WTC11 (cell line): ENCODE measurements at regions of chr10 and their contacts with region 1.

Region 1: DNA sequence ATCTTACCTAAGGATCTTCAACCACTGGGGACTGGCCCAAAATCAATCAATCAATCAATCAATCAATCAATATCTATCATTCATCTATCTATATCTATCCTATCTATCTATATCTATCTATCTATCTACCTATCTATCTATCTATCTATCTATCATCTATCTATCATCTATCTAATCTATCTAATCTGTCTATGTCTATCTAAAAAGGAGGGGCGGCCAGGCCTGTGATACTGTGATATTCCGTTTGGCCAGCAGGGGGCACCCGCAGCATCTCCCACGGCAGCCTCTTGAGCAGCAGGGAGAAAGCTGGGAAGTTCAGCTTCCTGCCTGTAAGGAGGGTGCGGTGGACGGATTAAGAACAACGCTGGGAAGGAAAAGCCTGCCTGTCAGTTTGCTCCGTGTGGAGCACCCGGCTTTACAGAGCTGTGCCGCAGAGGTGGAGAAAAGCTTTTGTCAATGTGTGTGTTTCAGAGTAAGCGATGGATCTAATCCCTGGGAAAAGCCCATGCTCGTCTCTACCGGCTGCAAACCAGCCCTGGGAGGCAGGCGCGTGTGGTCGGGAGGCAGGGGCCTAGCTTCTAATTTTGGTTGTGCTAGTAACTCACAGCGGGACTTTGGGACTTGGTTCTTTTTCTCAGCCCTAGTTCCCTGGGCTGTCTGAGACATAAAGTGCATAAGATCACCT is 125.0 kb downstream of the SH2D4B start:
- DNase-seq: peak; percentile 89
- ATAC-seq: peak; percentile 83
- H3K4me3 Mint-ChIP-seq: peak overlapping the region; percentile 64
- H3K27ac Mint-ChIP-seq: peak overlapping the region; percentile 55
- H3K4me1 Mint-ChIP-seq: peaks cover 18% of the 10 kb centered on the region
- H3K27me3 Mint-ChIP-seq: no peaks in the 10 kb centered on the region
- CTCF ChIP-seq: peak; percentile 88

Region 2: DNA sequence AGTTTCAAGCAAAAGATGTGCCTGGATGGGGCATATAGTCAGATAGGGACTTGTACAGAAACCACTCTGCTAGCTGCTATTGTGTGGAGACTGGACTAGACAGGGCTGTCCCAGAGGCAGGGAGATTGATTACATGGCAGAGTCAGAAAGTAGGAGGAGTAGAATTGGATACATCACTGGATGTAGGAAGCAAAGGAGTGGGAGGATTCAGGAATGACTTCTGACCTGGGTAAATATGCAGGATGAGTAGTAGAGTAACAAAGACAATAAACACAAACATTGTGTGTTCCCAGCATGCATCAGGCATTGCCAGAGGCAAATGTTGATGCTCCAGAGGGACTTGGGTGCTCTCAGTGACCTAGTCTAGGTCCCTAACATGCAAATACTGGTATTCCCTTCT is 342.3 kb before region 1 on chr10:
- CTCF ChIA-PET with region 1: no interaction called
- POLR2A ChIA-PET with region 1: no interaction called
- DNase-seq: no peak
- ATAC-seq: no peak
- H3K4me3 Mint-ChIP-seq: no peak overlapping the region
- H3K27ac Mint-ChIP-seq: no peak overlapping the region
- H3K4me1 Mint-ChIP-seq: peaks cover 8% of the 10 kb centered on the region
- H3K27me3 Mint-ChIP-seq: peaks cover 4% of the 10 kb centered on the region; the same call in 1 of the 2 replicates
- CTCF ChIP-seq: no peak

Region 3: DNA sequence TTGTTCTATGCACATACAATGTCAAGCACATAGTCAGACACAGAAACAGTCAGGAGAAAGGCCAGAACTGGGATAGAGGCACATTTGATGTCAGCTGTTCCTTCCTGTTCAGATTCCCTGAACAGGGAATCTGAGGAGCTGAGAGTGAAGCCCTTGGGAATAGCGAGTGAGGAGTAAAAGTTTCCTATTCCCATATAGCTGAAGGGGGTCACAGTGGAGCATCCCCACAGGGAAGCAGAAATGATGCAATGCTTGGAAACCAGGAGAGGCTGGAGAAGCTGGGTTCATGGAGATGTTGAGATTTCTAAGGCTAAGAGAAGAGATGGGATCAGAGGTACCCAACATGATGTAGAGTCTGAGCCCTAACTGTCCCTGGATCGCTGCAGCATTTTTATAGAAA is 265.7 kb before region 1 on chr10:
- CTCF ChIA-PET with region 1: no interaction called
- POLR2A ChIA-PET with region 1: no interaction called
- DNase-seq: no peak
- ATAC-seq: no peak
- H3K4me3 Mint-ChIP-seq: no peak overlapping the region
- H3K27ac Mint-ChIP-seq: no peak overlapping the region
- H3K4me1 Mint-ChIP-seq: no peaks in the 10 kb centered on the region
- H3K27me3 Mint-ChIP-seq: 0 out of 2 replicates have a peak, but pooled peaks cover 2% of the 10 kb centered on the region
- CTCF ChIP-seq: no peak

Region 4: DNA sequence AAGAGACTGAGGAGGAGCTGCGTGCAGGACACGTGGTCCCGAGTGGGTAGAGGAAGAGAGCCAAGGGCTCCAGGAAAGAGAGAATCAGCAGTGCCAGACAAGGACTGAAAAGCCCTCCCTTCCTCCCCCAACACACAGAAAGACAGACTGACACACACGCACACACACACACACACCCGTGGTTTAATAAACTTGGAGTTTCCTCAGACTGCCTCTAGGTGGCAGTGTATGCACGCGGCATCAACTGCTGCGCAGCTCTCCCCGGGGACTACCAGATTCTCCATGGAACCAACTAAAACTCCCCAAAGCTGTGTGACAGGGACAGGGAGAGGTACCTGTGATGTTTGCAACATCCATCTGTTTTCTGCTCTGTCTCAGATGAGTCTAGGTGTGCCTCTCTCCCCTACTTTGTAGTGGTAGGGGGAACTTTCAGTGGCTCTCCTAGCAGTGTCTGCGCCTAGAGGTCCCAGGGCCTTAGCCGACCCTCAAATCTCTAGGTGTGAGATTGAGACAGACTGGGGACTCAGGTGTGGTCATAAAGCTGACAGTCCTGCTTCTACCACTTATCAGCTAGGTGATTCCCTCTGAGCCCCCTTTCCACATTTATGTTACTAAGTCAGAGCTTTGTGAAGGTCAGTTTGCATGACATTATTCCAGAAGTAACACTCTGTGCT is 217.9 kb before region 1 on chr10:
- CTCF ChIA-PET with region 1: interaction called, 14 read pairs
- POLR2A ChIA-PET with region 1: no interaction called
- DNase-seq: peak; percentile 50
- ATAC-seq: peak; percentile 89
- H3K4me3 Mint-ChIP-seq: no peak overlapping the region
- H3K27ac Mint-ChIP-seq: no peak overlapping the region
- H3K4me1 Mint-ChIP-seq: peaks cover 19% of the 10 kb centered on the region
- H3K27me3 Mint-ChIP-seq: no peaks in the 10 kb centered on the region
- CTCF ChIP-seq: no peak

Region 5: GRCh38 chr10:80599424-80599847 is 63.3 kb before region 1 on chr10:
- CTCF ChIA-PET with region 1: interaction called, 49 read pairs
- POLR2A ChIA-PET with region 1: no interaction called
- DNase-seq: peak; percentile 78
- ATAC-seq: peak; percentile 93
- H3K4me3 Mint-ChIP-seq: no peak overlapping the region
- H3K27ac Mint-ChIP-seq: no peak overlapping the region
- H3K4me1 Mint-ChIP-seq: 0 out of 2 replicates have a peak, but pooled peaks cover 5% of the 10 kb centered on the region
- H3K27me3 Mint-ChIP-seq: no peaks in the 10 kb centered on the region
- CTCF ChIP-seq: peak; percentile 83

Region 6: GRCh38 chr10:80686734-80687475 is 24.2 kb after region 1 on chr10:
- CTCF ChIA-PET with region 1: interaction called, 32 read pairs
- POLR2A ChIA-PET with region 1: no interaction called
- DNase-seq: no peak
- ATAC-seq: peak; percentile 87
- H3K4me3 Mint-ChIP-seq: no peak overlapping the region
- H3K27ac Mint-ChIP-seq: no peak overlapping the region
- H3K4me1 Mint-ChIP-seq: no peaks in the 10 kb centered on the region
- H3K27me3 Mint-ChIP-seq: no peaks in the 10 kb centered on the region; the same call in 1 of the 2 replicates
- CTCF ChIP-seq: no peak

Region 7: GRCh38 chr10:80894797-80895467 is 232.2 kb after region 1 on chr10:
- CTCF ChIA-PET with region 1: interaction called, 11 read pairs
- POLR2A ChIA-PET with region 1: no interaction called
- DNase-seq: peak; percentile 22
- ATAC-seq: peak; percentile 65
- H3K4me3 Mint-ChIP-seq: peak overlapping the region; percentile 50
- H3K27ac Mint-ChIP-seq: peak overlapping the region; percentile 78
- H3K4me1 Mint-ChIP-seq: peaks cover 86% of the 10 kb centered on the region
- H3K27me3 Mint-ChIP-seq: peaks cover 98% of the 10 kb centered on the region
- CTCF ChIP-seq: no peak

Region 8: GRCh38 chr10:81013771-81014170 is 351.1 kb after region 1 on chr10:
- CTCF ChIA-PET with region 1: interaction called, 32 read pairs
- POLR2A ChIA-PET with region 1: no interaction called
- DNase-seq: no peak
- ATAC-seq: no peak
- H3K4me3 Mint-ChIP-seq: no peak overlapping the region
- H3K27ac Mint-ChIP-seq: no peak overlapping the region
- H3K4me1 Mint-ChIP-seq: peaks cover 5% of the 10 kb centered on the region
- H3K27me3 Mint-ChIP-seq: no peaks in the 10 kb centered on the region
- CTCF ChIP-seq: no peak